AG04450 (cell line): ENCODE measurements at regions of chrX and their contacts with region 1.

Region 1: DNA sequence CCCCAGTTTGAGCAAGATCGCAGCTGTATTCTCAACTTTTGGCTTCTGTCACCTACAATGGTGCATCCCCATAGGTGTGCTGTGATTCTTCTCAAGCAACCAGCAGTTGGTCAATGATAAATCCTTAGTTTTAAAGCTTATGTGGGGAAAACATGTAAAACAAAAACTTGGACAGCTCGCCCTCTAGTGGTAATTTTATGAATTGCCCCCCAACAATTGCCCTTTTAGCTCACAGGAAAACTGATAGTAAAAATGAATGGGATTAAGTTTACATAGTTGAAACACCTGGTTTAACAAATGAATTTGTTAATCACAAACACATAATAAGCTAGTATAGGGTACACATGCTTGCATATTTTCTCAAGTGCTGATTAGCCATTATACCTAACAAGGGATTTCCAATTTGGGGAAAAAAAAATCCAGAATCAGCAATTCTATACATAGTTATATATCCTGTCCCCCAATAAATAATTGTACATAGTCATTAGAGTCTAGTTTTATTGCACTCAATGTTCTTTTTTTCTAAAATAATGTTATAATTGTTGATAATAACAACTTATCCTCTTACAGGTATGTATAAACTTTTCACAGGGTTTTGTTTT is 30.1 kb downstream of the TEX13A start:
- DNase-seq: no peak
- H3K4me3 ChIP-seq: no peak overlapping the region
- H3K27ac ChIP-seq: no peak overlapping the region
- H3K27me3 ChIP-seq: no peaks in the 10 kb centered on the region
- CTCF ChIP-seq: peak; percentile 64

Region 2: DNA sequence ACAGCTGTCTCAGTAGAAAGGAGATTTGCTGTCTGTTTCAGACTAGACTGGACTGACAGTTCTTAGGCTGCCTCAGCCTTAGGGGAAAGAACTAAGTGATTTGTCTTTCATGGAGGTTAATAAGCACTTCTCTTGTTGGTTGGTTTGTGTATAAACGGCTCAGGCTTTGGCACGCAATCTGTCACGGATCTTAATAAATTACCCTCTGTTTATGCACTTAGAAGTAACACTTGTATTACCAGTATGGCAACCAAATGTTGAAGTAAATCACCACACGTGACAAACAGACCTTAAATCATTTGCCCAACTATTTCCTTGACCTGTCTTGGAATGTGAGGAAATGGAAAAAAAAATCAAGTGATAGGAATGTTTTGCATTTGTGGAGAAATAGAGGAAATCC is 39.8 kb before region 1 on chrX:
- CTCF ChIA-PET with region 1: no interaction called
- POLR2A ChIA-PET with region 1: no interaction called
- DNase-seq: no peak
- H3K4me3 ChIP-seq: no peak overlapping the region
- H3K27ac ChIP-seq: no peak overlapping the region
- H3K27me3 ChIP-seq: no peaks in the 10 kb centered on the region
- CTCF ChIP-seq: no peak

Region 3: DNA sequence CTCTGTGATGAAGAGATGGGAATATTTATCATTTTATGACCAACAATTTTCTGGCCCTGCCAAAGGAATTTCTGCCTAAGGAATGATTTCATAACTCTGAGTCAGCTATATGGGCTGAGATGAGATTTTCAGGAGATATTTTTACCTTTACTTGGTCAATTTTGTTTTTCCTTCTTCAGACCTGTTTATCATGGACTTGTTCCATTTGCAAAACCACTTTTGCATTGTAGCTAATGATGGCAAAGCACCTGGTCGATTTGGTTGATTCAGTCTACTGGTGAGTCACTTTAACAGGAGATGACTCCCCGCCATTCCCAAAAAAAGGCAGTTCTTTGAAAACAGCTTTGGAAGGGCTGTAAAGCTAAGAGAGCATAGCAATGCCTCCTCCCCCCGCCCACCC is 23.1 kb before region 1 on chrX:
- CTCF ChIA-PET with region 1: interaction called, 10 read pairs
- POLR2A ChIA-PET with region 1: no interaction called
- DNase-seq: no peak
- H3K4me3 ChIP-seq: no peak overlapping the region
- H3K27ac ChIP-seq: no peak overlapping the region
- H3K27me3 ChIP-seq: no peaks in the 10 kb centered on the region
- CTCF ChIP-seq: no peak